ENCODE measurements at regions of chr7 and their contacts with region 1.

Region 1: GRCh38 chr7:35424869-35425495 is 171.1 kb upstream of the TBX20 start:
- DNase-seq: peak; percentile 65
- ATAC-seq: peak; percentile 73
- H3K4me3 ChIP-seq: no peak overlapping the region
- H3K4me3 Mint-ChIP-seq: no peak overlapping the region
- H3K27ac ChIP-seq: no peak overlapping the region
- H3K27ac Mint-ChIP-seq: no peak overlapping the region
- H3K4me1 ChIP-seq: no peaks in the 10 kb centered on the region
- H3K4me1 Mint-ChIP-seq: no peaks in the 10 kb centered on the region
- H3K27me3 ChIP-seq: peaks cover 0 to 9% (median 0%) of the 10 kb centered on the region in 4 experiments
- H3K27me3 Mint-ChIP-seq: peaks cover 22% of the 10 kb centered on the region
- CTCF ChIP-seq: peak; percentile 84

Region 2: GRCh38 chr7:35519971-35520809 is 95.2 kb after region 1 on chr7:
- CTCF ChIA-PET with region 1: interaction called, 10 read pairs
- POLR2A ChIA-PET with region 1: no interaction called
- intact Hi-C with region 1: no loop called
- DNase-seq: peak; percentile 65
- ATAC-seq: peak; percentile 51
- H3K4me3 ChIP-seq: no peak overlapping the region
- H3K4me3 Mint-ChIP-seq: no peak overlapping the region
- H3K27ac ChIP-seq: no peak overlapping the region
- H3K27ac Mint-ChIP-seq: no peak overlapping the region
- H3K4me1 ChIP-seq: no peaks in the 10 kb centered on the region
- H3K4me1 Mint-ChIP-seq: peaks cover 4% of the 10 kb centered on the region
- H3K27me3 ChIP-seq: peaks cover 0 to 11% (median 5%) of the 10 kb centered on the region in 4 experiments
- H3K27me3 Mint-ChIP-seq: peaks cover 19% of the 10 kb centered on the region
- CTCF ChIP-seq: peak; percentile 81

Region 3: GRCh38 chr7:35906191-35906908 is 481.4 kb after region 1 on chr7:
- CTCF ChIA-PET with region 1: interaction called, 17 read pairs
- POLR2A ChIA-PET with region 1: no interaction called
- intact Hi-C with region 1: loop called (anchors 1 kb)
- DNase-seq: peak; percentile 85
- ATAC-seq: peak; percentile 95
- H3K4me3 ChIP-seq: no peak overlapping the region
- H3K4me3 Mint-ChIP-seq: no peak overlapping the region
- H3K27ac ChIP-seq: peak overlapping the region in 1 of 2 donors; percentile 55
- H3K27ac Mint-ChIP-seq: peak overlapping the region; percentile 73
- H3K4me1 ChIP-seq: peaks cover 0 to 2% of the 10 kb centered on the region in 2 donors
- H3K4me1 Mint-ChIP-seq: peaks cover 5% of the 10 kb centered on the region
- H3K27me3 ChIP-seq: no peaks in the 10 kb centered on the region
- H3K27me3 Mint-ChIP-seq: no peaks in the 10 kb centered on the region
- CTCF ChIP-seq: peak; percentile 96

Measured in B cell (primary cell).